IMR-90 (cell line): ENCODE measurements at regions of chr11 and their contacts with region 1.

Region 1: DNA sequence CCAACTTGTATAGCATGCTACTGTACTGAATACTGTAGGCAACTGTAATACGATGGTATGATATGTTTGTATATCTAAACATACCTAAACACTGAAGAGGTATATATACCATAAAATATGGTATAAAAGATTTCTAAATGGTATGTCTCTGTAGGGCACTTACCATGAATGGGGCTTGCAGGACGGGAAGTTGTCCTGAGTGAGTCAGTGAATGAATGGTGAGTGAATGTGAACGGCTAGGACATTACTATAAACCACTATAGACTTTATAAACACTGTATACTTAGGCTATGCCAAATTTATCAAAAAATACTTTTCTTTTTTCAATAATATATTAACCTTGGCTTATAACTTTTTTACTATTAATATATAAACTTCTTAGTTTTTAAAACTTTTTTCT is 66.8 kb downstream of the ZC3H12C start:
- DNase-seq: peak; percentile 79
- ATAC-seq: peak; percentile 96
- H3K4me3 ChIP-seq: no peak overlapping the region
- H3K27ac ChIP-seq: no peak overlapping the region
- H3K4me1 ChIP-seq: peaks cover 5% of the 10 kb centered on the region
- H3K27me3 ChIP-seq: no peaks in the 10 kb centered on the region
- CTCF ChIP-seq: no peak
- POLR2A ChIP-seq: no peak
- RAD21 ChIP-seq: no peak

Region 2: GRCh38 chr11:110128161-110128560 is 31.9 kb before region 1 on chr11:
- CTCF ChIA-PET with region 1: no interaction called
- POLR2A ChIA-PET with region 1: no interaction called
- dilution Hi-C with region 1: no loop called
- in situ Hi-C with region 1: no loop called
- intact Hi-C with region 1: loop called (anchors 5 kb)
- DNase-seq: peak; percentile 42
- ATAC-seq: peak; percentile 70
- H3K4me3 ChIP-seq: no peak overlapping the region
- H3K27ac ChIP-seq: no peak overlapping the region
- H3K4me1 ChIP-seq: peaks cover 1% of the 10 kb centered on the region
- H3K27me3 ChIP-seq: no peaks in the 10 kb centered on the region
- CTCF ChIP-seq: no peak
- POLR2A ChIP-seq: no peak
- RAD21 ChIP-seq: no peak

Region 3: DNA sequence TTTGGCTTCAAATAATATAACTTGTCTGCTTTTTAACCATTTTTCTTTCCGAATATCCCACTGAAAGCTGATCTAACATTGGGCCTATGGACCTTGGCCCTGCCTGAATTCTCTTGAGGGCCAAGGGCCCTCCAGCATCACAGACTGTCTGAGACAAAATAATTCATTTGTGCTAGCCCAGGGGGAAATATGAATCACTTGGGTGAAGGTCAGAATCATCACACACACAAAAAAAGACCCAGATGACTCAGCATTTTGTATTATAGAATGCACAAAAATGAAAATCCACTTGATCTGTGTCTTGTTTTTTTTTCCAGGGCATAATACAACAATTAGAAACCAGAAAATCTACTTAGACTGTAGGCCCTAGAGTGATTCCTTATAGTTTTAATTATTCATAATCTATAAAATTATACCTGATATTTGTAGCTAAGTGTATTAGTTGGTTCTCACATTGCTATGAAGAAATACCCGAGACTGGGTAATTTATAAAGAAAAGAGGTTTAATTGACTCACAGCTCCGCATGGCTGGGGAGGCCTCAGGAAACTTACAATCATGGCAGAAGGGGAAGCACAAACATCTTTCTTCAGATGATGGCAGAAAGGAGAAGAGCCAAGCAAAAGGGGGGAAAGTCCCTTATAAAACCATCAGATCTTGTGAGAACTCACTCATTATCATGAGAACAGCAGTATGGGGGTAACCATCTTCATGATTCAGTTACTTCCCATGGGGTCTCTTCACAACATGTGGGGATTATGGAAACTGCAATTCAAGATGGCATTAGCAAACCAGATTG is 152.0 kb after region 1 on chr11:
- CTCF ChIA-PET with region 1: no interaction called
- POLR2A ChIA-PET with region 1: no interaction called
- dilution Hi-C with region 1: no loop called
- in situ Hi-C with region 1: no loop called
- intact Hi-C with region 1: no loop called
- DNase-seq: peak; percentile 75
- ATAC-seq: peak; percentile 59
- H3K4me3 ChIP-seq: no peak overlapping the region
- H3K27ac ChIP-seq: no peak overlapping the region
- H3K4me1 ChIP-seq: peaks cover 2% of the 10 kb centered on the region; the same call in 1 of the 2 replicates
- H3K27me3 ChIP-seq: no peaks in the 10 kb centered on the region; the same call in 1 of the 2 replicates
- CTCF ChIP-seq: no peak
- POLR2A ChIP-seq: no peak
- RAD21 ChIP-seq: no peak